Naive thymus-derived CD4-positive, alpha-beta T cell (primary cell): ENCODE measurements at regions of chr9 and their contacts with region 1.

Region 1: GRCh38 chr9:69121828-69122548 is 52.1 kb upstream of the TJP2 start:
- DNase-seq: peak; percentile 36 to 68 (median 56)
- ATAC-seq: peak; percentile 82
- H3K4me3 ChIP-seq: peak overlapping the region; percentile 81
- H3K4me3 Mint-ChIP-seq: peak overlapping the region; percentile 94 to 98 (median 98)
- H3K27ac ChIP-seq: peak overlapping the region; percentile 49
- H3K27ac Mint-ChIP-seq: peak overlapping the region; percentile 72 to 95 (median 85)
- H3K4me1 ChIP-seq: peaks cover 0 to 7% of the 10 kb centered on the region in 2 donors
- H3K4me1 Mint-ChIP-seq: peaks cover 0 to 19% (median 11%) of the 10 kb centered on the region in 7 donors
- H3K27me3 ChIP-seq: no peaks in the 10 kb centered on the region
- H3K27me3 Mint-ChIP-seq: peaks cover 0 to 14% (median 0%) of the 10 kb centered on the region in 5 donors

Region 2: DNA sequence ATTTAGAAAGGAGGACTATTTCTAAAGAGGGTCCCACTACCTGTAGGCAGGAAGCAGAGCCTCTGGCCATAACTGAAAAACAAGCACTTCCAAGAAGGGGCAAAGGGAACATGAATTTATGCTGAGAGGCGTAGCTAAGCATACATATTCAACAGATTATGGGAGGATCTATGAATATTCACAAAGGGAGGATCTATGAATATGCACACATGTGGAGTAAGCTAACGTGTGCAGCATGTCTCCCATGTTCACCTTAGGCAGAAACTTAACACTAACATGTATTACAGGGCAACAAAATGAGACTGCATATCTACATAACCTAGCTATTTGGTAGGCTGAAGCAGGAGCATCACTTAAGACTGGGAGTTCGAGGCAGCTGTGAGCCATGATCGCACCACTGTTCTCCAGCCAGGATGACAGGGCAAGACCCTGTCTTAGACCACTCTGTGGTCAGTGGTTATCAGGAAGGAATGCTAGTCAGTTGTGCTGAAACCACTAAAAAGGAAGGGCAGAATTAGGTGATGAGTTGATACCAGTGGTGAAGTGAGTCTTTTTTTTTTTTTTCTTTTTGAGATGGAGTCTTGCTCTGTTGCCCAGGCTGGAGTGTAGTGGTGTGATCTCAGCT is 65.7 kb before region 1 on chr9:
- CTCF ChIA-PET with region 1: no interaction called
- POLR2A ChIA-PET with region 1: no interaction called
- intact Hi-C with region 1: loop called in 1 of 2 experiments (anchors 5 kb)
- DNase-seq: no peak
- ATAC-seq: no peak
- H3K4me3 ChIP-seq: no peak overlapping the region
- H3K4me3 Mint-ChIP-seq: peak overlapping the region in 1 of 10 donors; percentile 16
- H3K27ac ChIP-seq: no peak overlapping the region
- H3K27ac Mint-ChIP-seq: peak overlapping the region in 1 of 9 donors; percentile 68
- H3K4me1 ChIP-seq: no peaks in the 10 kb centered on the region
- H3K4me1 Mint-ChIP-seq: peaks cover 0 to 25% (median 6%) of the 10 kb centered on the region in 7 donors
- H3K27me3 ChIP-seq: no peaks in the 10 kb centered on the region
- H3K27me3 Mint-ChIP-seq: no peaks in the 10 kb centered on the region

Region 3: DNA sequence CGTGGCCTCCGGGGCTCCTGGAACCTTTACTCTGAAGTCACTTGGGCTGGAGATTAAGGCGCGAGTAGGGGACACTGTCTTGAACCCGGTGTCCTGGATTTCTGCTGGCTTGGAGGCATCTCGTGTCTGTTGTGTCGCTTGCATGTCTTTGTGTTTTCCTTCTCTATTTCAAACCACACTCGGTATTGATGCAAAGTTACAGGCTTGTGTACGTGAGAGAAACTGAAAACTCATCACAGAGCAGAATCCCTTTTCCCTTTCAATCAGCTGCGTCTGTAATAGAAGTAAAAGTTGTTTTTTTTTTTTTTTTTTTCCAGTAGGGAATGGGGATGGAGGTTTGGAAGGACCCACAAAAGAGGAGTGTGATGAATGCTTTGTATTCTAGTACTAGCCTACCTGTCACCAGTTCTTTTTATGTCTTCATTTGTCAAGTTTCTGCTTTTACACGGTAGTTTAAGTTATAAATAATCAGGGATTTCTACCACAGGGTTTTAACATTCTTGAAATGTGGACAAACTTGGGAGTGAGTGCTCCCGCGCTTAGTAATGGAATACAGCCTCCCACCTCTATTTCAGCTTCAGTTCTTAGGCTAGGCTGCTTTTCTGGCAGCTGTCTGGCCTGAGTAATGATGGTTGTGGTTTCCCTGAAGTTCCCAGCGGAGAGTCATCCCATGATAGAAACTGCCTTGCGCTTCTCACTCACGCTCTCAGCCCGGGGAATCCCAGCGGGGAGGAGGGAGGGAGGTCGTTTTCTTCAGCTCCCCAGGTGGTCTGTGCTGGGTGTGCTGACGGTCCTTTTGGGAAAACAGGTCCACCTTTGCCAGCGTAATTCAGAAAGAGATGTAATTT is 52.9 kb after region 1 on chr9:
- CTCF ChIA-PET with region 1: no interaction called
- POLR2A ChIA-PET with region 1: no interaction called
- intact Hi-C with region 1: loop called (anchors 2 to 5 kb)
- DNase-seq: peak in 1 of 9 donors; percentile 69
- ATAC-seq: peak; percentile 57
- H3K4me3 ChIP-seq: peak overlapping the region; percentile 36
- H3K4me3 Mint-ChIP-seq: peak overlapping the region; percentile 76 to 92 (median 82)
- H3K27ac ChIP-seq: no peak overlapping the region
- H3K27ac Mint-ChIP-seq: peak overlapping the region in 1 of 9 donors; percentile 79
- H3K4me1 ChIP-seq: peaks cover 10 to 12% of the 10 kb centered on the region in 2 donors
- H3K4me1 Mint-ChIP-seq: peaks cover 25 to 60% (median 30%) of the 10 kb centered on the region in 7 donors
- H3K27me3 ChIP-seq: no peaks in the 10 kb centered on the region
- H3K27me3 Mint-ChIP-seq: peaks cover 15 to 43% (median 24%) of the 10 kb centered on the region in 5 donors

Region 4: GRCh38 chr9:69622676-69623075 is 500.7 kb after region 1 on chr9:
- CTCF ChIA-PET with region 1: no interaction called
- POLR2A ChIA-PET with region 1: no interaction called
- intact Hi-C with region 1: no loop called
- DNase-seq: no peak
- ATAC-seq: no peak
- H3K4me3 ChIP-seq: no peak overlapping the region
- H3K4me3 Mint-ChIP-seq: no peak overlapping the region
- H3K27ac ChIP-seq: no peak overlapping the region
- H3K27ac Mint-ChIP-seq: no peak overlapping the region
- H3K4me1 ChIP-seq: no peaks in the 10 kb centered on the region
- H3K4me1 Mint-ChIP-seq: no peaks in the 10 kb centered on the region
- H3K27me3 ChIP-seq: no peaks in the 10 kb centered on the region
- H3K27me3 Mint-ChIP-seq: peaks cover 0 to 9% (median 1%) of the 10 kb centered on the region in 5 donors

Region 5: GRCh38 chr9:70406434-70406862 is 1284.5 kb after region 1 on chr9:
- CTCF ChIA-PET with region 1: no interaction called
- POLR2A ChIA-PET with region 1: no interaction called
- intact Hi-C with region 1: no loop called
- DNase-seq: peak in 3 of 9 donors; percentile 18 to 35 (median 28)
- ATAC-seq: peak; percentile 61
- H3K4me3 ChIP-seq: no peak overlapping the region
- H3K4me3 Mint-ChIP-seq: peak overlapping the region; percentile 61 to 87 (median 80)
- H3K27ac ChIP-seq: peak overlapping the region; percentile 46
- H3K27ac Mint-ChIP-seq: peak overlapping the region; percentile 71 to 96 (median 84)
- H3K4me1 ChIP-seq: peaks cover 32 to 64% of the 10 kb centered on the region in 2 donors
- H3K4me1 Mint-ChIP-seq: peaks cover 59 to 91% (median 83%) of the 10 kb centered on the region in 7 donors
- H3K27me3 ChIP-seq: no peaks in the 10 kb centered on the region
- H3K27me3 Mint-ChIP-seq: no peaks in the 10 kb centered on the region